ENCODE measurements at regions of chrX and their contacts with region 1.

Region 1: DNA sequence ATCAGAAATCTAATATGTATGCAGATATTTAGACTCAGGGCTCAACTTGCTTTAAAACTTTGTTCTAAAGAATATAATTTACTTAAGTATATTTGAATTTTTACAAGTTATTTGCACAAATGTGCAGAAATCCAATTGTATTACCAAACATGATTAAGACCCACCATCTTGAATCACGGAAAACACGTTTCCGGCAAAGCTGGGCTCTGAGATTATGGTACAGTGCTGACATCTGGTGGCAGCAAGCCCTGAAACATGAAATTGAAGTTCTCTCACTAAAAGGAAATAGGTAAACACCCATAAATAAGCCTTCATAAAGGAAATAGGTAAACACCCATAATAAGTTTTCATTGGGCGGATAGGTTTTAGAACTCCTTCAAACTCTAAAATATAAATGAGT is 98.3 kb upstream of the MAOA start:
- DNase-seq: peak in 1 of 2 donors; percentile 14
- ATAC-seq: peak in 2 of 4 donors; percentile 48 to 68
- H3K4me3 ChIP-seq: no peak overlapping the region
- H3K27ac ChIP-seq: no peak overlapping the region
- H3K4me1 ChIP-seq: no peaks in the 10 kb centered on the region
- H3K27me3 ChIP-seq: peaks cover 0 to 6% (median 0%) of the 10 kb centered on the region in 3 donors
- CTCF ChIP-seq: peak; percentile 63

Region 2: GRCh38 chrX:41781502-41781901 is 1776.3 kb before region 1 on chrX:
- intact Hi-C with region 1: loop called in 1 of 2 experiments (anchors 10 kb)
- DNase-seq: no peak
- ATAC-seq: peak in 2 of 4 donors; percentile 23 to 58
- H3K4me3 ChIP-seq: no peak overlapping the region
- H3K27ac ChIP-seq: no peak overlapping the region
- H3K4me1 ChIP-seq: peaks cover 8% of the 10 kb centered on the region
- H3K27me3 ChIP-seq: no peaks in the 10 kb centered on the region
- CTCF ChIP-seq: peak; percentile 68

Region 3: DNA sequence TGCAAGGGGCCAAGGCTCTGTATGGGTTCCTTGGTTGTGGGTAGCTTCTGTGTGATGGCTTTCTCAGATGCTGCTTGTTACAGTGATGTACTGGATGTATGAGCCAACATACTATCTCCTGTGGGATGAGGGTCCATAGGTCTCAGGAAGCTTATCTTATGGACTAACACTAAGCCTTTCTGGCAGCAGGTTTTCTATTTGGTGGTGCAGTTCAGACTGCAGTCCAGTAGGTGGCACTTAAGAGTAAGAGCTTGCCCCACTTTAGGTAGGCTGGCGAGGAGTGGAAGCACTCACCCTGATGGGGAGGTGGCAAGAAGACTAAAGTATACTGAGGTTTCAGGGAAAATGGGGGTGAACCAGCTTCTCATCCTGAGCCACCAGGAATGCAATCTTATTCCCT is 208.4 kb before region 1 on chrX:
- intact Hi-C with region 1: loop called (anchors 5 to 10 kb)
- DNase-seq: no peak
- ATAC-seq: no peak
- H3K4me3 ChIP-seq: no peak overlapping the region
- H3K27ac ChIP-seq: no peak overlapping the region
- H3K4me1 ChIP-seq: no peaks in the 10 kb centered on the region
- H3K27me3 ChIP-seq: peaks cover 0 to 2% (median 0%) of the 10 kb centered on the region in 3 donors
- CTCF ChIP-seq: peak; percentile 43

Region 4: GRCh38 chrX:43357741-43358140 is 200.1 kb before region 1 on chrX:
- intact Hi-C with region 1: loop called (anchors 5 to 10 kb)
- DNase-seq: no peak
- ATAC-seq: no peak
- H3K4me3 ChIP-seq: no peak overlapping the region
- H3K27ac ChIP-seq: no peak overlapping the region
- H3K4me1 ChIP-seq: no peaks in the 10 kb centered on the region
- H3K27me3 ChIP-seq: peaks cover 0 to 5% (median 0%) of the 10 kb centered on the region in 3 donors
- CTCF ChIP-seq: no peak

Region 5: DNA sequence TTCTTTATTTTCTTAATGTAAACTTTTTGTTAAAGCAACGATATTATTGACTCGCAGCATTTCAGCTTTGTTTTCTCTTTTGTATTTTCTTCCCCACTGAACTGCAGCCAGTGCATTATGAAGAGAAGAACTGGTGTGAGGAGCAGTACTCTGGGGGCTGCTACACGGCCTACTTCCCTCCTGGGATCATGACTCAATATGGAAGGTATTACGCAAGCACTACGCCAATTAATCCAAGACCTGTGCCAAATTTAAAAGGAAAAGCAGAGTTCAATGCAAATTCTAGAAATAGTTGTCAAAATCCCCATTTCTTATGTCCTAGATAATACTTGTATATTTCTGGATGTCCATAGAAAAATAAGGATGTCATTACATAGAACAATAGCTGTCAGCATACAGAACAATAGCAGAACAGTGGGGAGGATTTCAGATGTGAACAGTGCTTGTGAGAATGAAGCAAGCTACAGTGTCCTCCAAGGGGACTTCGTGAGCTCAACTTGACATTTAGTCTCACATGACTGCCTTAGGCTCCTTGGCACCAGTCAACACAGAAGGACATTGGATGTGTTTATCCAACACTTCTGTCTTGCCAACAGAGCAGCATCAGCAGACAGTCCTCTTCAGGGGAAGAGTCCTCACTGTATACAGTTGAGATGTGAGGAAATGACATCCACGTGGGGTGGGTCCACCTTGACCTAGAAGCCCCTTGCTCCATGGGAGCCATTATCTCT is 184.2 kb after region 1 on chrX:
- intact Hi-C with region 1: loop called in 1 of 2 experiments (anchors 5 kb)
- DNase-seq: no peak
- ATAC-seq: peak in 3 of 4 donors; percentile 77 to 89 (median 88)
- H3K4me3 ChIP-seq: no peak overlapping the region
- H3K27ac ChIP-seq: no peak overlapping the region
- H3K4me1 ChIP-seq: no peaks in the 10 kb centered on the region
- H3K27me3 ChIP-seq: peaks cover 0 to 12% (median 0%) of the 10 kb centered on the region in 3 donors
- CTCF ChIP-seq: no peak

Region 6: DNA sequence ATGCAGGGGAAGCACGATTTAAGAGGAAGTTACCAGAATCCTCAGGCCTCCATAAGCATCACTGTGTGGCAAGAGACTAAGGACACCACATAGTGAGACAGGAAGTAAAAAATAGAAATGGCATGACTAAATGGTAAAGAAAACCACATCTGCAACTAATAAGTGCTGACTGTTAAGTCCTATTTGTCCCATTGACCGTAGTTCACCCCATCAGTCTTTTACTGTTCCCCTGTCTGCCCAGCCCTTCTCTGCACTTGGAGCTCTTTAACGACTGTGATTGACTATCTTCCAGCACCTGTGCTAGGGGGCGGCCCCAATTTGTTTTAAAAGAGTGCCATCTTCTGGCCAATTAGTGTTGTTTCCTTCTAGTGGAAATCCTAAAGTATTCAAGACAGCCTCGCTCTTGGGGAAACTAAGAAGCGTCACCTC is 192.5 kb after region 1 on chrX:
- intact Hi-C with region 1: loop called (anchors 1 to 5 kb)
- DNase-seq: peak; percentile 23 to 49
- ATAC-seq: peak; percentile 65 to 90 (median 78)
- H3K4me3 ChIP-seq: no peak overlapping the region
- H3K27ac ChIP-seq: no peak overlapping the region
- H3K4me1 ChIP-seq: no peaks in the 10 kb centered on the region
- H3K27me3 ChIP-seq: peaks cover 0 to 6% (median 0%) of the 10 kb centered on the region in 3 donors
- CTCF ChIP-seq: peak; percentile 56

Measured in psoas muscle (tissue), 8 donors.